Thyroid gland (tissue), 4 donors: ENCODE measurements at regions of chr1 and their contacts with region 1.

Region 1: GRCh38 chr1:244605835-244606370 is 47.0 kb upstream of the DESI2 start:
- DNase-seq: no peak
- H3K4me3 ChIP-seq: no peak overlapping the region
- H3K27ac ChIP-seq: no peak overlapping the region
- H3K4me1 ChIP-seq: no peaks in the 10 kb centered on the region
- H3K27me3 ChIP-seq: no peaks in the 10 kb centered on the region
- CTCF ChIP-seq: no peak
- POLR2A ChIP-seq: no peak

Region 2: DNA sequence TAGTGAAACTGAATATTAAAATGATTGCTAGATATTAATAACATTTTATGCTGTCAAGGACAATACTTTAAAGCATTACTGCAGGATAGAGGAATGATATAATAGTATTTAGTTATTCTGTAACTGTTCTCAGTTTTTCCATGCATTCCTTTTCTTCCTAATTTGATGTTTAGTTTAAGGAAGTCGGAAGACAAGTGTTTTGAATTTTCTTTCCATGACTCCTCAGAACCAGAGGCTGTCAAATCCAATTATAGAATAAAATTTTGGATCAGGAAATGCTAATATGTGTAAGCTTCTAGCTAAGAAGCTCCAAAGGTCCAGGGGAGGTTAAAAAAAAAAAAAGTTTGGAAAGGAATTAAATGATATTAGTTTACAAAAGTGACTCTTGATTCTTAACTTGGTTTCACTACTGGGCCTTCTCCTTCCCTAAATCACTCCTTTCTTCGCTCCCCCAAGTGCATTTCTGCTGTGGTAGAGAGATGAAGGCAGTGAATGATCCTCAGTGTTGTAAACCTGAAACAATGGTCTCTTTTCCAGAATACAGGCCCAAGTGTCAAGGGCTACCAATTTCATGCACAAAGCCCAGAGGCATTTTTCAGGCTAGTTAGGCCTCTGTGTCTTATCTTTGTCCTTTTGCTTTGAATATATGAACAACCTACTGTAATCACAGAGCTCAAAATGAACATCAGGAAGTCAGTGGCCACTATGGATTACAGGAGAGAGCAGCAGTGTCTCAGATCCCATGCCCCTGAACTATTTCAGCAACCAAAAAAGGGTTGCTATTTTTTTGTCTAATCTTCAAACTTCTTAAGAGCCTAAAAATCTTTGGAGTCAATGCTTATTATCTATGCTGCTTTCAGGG is 160.4 kb before region 1 on chr1:
- intact Hi-C with region 1: no loop called
- DNase-seq: no peak
- H3K4me3 ChIP-seq: no peak overlapping the region
- H3K27ac ChIP-seq: peak overlapping the region in 2 of 3 donors; percentile 2 to 43
- H3K4me1 ChIP-seq: peaks cover 14 to 38% of the 10 kb centered on the region in 2 donors
- H3K27me3 ChIP-seq: no peaks in the 10 kb centered on the region
- CTCF ChIP-seq: no peak
- POLR2A ChIP-seq: no peak

Region 3: GRCh38 chr1:244796718-244797406 is 191.0 kb after region 1 on chr1:
- intact Hi-C with region 1: loop called (anchors 2 kb)
- DNase-seq: peak; percentile 61 to 65
- H3K4me3 ChIP-seq: no peak overlapping the region
- H3K27ac ChIP-seq: no peak overlapping the region
- H3K4me1 ChIP-seq: no peaks in the 10 kb centered on the region
- H3K27me3 ChIP-seq: no peaks in the 10 kb centered on the region
- CTCF ChIP-seq: peak; percentile 86 to 94 (median 90)
- POLR2A ChIP-seq: no peak